Caco-2 (cell line): ENCODE measurements at regions of chr1 and their contacts with region 1.

Region 1: GRCh38 chr1:8314346-8315280 is 3.3 kb upstream of the SLC45A1 start:
- DNase-seq: peak; percentile 79 to 88
- H3K4me3 ChIP-seq: no peak overlapping the region
- H3K4me3 Mint-ChIP-seq: no peak overlapping the region
- H3K27ac Mint-ChIP-seq: peak overlapping the region; percentile 39
- H3K4me1 ChIP-seq: peaks cover 13% of the 10 kb centered on the region; the same call in 1 of the 2 replicates
- H3K4me1 Mint-ChIP-seq: peaks cover 21% of the 10 kb centered on the region
- H3K27me3 ChIP-seq: no peaks in the 10 kb centered on the region
- H3K27me3 Mint-ChIP-seq: no peaks in the 10 kb centered on the region
- CTCF ChIP-seq: peak; percentile 86 to 88

Region 2: GRCh38 chr1:7975212-7975865 is 339.3 kb before region 1 on chr1:
- CTCF ChIA-PET with region 1: interaction called, 42 read pairs
- POLR2A ChIA-PET with region 1: no interaction called
- intact Hi-C with region 1: loop called (anchors 1 kb)
- DNase-seq: peak; percentile 82 to 91
- H3K4me3 ChIP-seq: no peak overlapping the region
- H3K4me3 Mint-ChIP-seq: no peak overlapping the region
- H3K27ac Mint-ChIP-seq: peak overlapping the region; percentile 38
- H3K4me1 ChIP-seq: no peaks in the 10 kb centered on the region
- H3K4me1 Mint-ChIP-seq: peaks cover 7% of the 10 kb centered on the region
- H3K27me3 ChIP-seq: no peaks in the 10 kb centered on the region
- H3K27me3 Mint-ChIP-seq: no peaks in the 10 kb centered on the region
- CTCF ChIP-seq: peak; percentile 86 to 97

Region 3: GRCh38 chr1:8015036-8015808 is 299.4 kb before region 1 on chr1:
- CTCF ChIA-PET with region 1: interaction called, 69 read pairs
- POLR2A ChIA-PET with region 1: interaction called, 4 read pairs
- intact Hi-C with region 1: loop called (anchors 1 kb)
- DNase-seq: peak in 1 of 2 experiments; percentile 65
- H3K4me3 ChIP-seq: no peak overlapping the region
- H3K4me3 Mint-ChIP-seq: no peak overlapping the region
- H3K27ac Mint-ChIP-seq: no peak overlapping the region
- H3K4me1 ChIP-seq: peaks cover 55% of the 10 kb centered on the region
- H3K4me1 Mint-ChIP-seq: peaks cover 46% of the 10 kb centered on the region
- H3K27me3 ChIP-seq: no peaks in the 10 kb centered on the region
- H3K27me3 Mint-ChIP-seq: no peaks in the 10 kb centered on the region
- CTCF ChIP-seq: peak; percentile 44 to 52

Region 4: GRCh38 chr1:8182034-8182761 is 132.4 kb before region 1 on chr1:
- CTCF ChIA-PET with region 1: interaction called, 4 read pairs
- POLR2A ChIA-PET with region 1: no interaction called
- intact Hi-C with region 1: loop called (anchors 10 kb)
- DNase-seq: peak; percentile 75 to 76
- H3K4me3 ChIP-seq: no peak overlapping the region
- H3K4me3 Mint-ChIP-seq: peak overlapping the region; percentile 59
- H3K27ac Mint-ChIP-seq: peak overlapping the region; percentile 82
- H3K4me1 ChIP-seq: peaks cover 18% of the 10 kb centered on the region
- H3K4me1 Mint-ChIP-seq: peaks cover 13% of the 10 kb centered on the region
- H3K27me3 ChIP-seq: no peaks in the 10 kb centered on the region
- H3K27me3 Mint-ChIP-seq: no peaks in the 10 kb centered on the region
- CTCF ChIP-seq: no peak

Region 5: DNA sequence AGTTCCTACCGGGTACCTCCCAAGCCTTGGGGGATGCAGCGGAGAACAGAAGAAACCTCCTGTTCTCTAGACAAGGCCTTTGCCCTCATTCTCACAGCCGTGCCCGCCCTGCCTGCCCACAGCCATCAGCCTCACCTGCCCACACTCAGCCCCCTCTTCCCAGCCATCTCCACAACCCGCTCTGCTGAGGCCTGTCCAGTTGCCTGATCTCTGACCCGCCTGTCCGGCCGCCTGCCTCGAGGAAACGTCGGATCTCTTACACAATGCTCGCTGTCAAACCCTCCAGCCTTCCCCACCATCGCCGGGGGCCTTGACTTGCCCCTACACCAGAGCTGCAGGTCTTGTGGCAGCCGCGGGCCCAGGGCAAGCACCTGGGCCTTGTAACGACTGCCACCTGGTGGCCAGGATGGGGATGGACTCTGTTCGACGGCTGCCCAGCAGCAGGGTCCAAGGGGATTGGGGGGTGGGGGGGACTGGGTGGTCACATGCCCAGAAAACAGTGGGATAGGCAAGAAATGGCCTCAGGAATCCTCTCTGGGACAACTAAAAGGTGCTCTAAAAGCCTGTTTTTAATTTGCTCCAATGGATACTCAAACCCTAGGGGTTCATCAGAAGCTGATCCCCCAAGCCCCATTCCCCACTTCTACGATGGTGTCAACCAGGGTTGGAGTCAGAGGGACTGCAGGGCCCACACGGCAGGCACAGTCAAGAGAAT is 34.3 kb after region 1 on chr1:
- CTCF ChIA-PET with region 1: interaction called, 4 read pairs
- POLR2A ChIA-PET with region 1: no interaction called
- intact Hi-C with region 1: loop called (anchors 2 kb)
- DNase-seq: peak; percentile 65 to 75
- H3K4me3 ChIP-seq: no peak overlapping the region
- H3K4me3 Mint-ChIP-seq: no peak overlapping the region
- H3K27ac Mint-ChIP-seq: peak overlapping the region; percentile 16
- H3K4me1 ChIP-seq: no peaks in the 10 kb centered on the region
- H3K4me1 Mint-ChIP-seq: peaks cover 6% of the 10 kb centered on the region
- H3K27me3 ChIP-seq: no peaks in the 10 kb centered on the region
- H3K27me3 Mint-ChIP-seq: no peaks in the 10 kb centered on the region
- CTCF ChIP-seq: peak; percentile 84